ENCODE measurements at regions of chr14 and their contacts with region 1.

Region 1: DNA sequence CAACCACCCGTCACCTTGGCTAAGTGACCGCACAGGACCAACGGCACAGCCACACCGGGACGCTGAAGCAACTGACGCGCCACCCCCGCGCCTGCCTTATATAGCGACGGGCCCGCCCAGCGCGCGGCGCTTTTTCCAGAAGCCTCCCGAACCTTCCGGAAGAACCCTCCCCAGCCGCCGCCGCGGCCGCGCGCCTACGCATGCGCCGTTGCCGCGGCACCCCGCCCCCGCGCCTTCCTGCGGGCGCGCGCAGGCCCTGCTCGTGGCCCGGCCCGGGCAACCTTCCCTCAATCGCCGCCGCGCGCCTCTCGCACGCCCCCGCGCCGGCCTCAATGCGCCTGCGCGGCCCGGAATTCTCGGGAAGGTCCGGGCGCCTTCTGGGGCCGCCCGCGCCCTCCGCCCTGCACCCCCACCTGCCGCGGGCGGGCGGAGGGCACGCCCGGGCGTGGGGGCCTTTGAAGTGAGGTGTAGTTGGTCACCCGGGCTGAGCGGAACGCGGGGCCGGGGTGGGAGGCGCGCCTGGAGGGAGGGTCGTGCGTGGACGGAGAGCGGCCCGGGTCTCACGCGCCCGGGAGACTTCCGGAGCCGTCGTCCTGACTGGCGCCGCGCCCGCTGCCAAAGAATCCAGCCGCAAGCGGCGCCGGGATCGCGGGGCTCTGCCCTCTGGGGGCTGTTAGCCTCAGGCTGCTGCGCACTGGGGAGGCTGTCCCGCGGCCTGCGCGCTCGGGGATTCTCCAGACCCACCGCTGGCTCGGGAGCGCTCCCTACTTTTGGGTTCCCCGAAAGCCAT is at the start of gene HSP90AA1:
- DNase-seq: peak; percentile 97
- H3K4me3 ChIP-seq: peak within 1 kb of the TSS; percentile 91 to 99 (median 94)
- H3K27ac ChIP-seq: peak within 1 kb of the TSS; percentile 99 to 100 (median 100)
- H3K4me1 ChIP-seq: peaks cover 2 to 50% (median 47%) of the 10 kb centered on the region in 4 donors
- H3K27me3 ChIP-seq: no peaks in the 10 kb centered on the region
- CTCF ChIP-seq: peak in 2 of 4 experiments; percentile 15 to 24
- EP300 ChIP-seq: peak in 1 of 4 donors; percentile 32
- POLR2A ChIP-seq: peak; percentile 98
- total RNA-seq, gene HSP90AA1: 252 to 463 (median 333) TPM

Region 2: GRCh38 chr14:101761032-101761880 is 325.9 kb before region 1 on chr14 and contains the start of gene PPP2R5C:
- intact Hi-C with region 1: no loop called
- DNase-seq: peak; percentile 97
- H3K4me3 ChIP-seq: peak within 1 kb of the TSS; percentile 65 to 98 (median 82)
- H3K27ac ChIP-seq: peak within 1 kb of the TSS; percentile 89 to 98 (median 95)
- H3K4me1 ChIP-seq: peaks cover 0 to 22% (median 19%) of the 10 kb centered on the region in 4 donors
- H3K27me3 ChIP-seq: no peaks in the 10 kb centered on the region
- CTCF ChIP-seq: no peak
- EP300 ChIP-seq: no peak
- POLR2A ChIP-seq: peak; percentile 72 to 91
- total RNA-seq, gene PPP2R5C: 115 to 175 (median 147) TPM

Region 3: GRCh38 chr14:101932673-101933072 is 154.5 kb before region 1 on chr14:
- intact Hi-C with region 1: no loop called
- DNase-seq: peak; percentile 34
- H3K4me3 ChIP-seq: no peak overlapping the region
- H3K27ac ChIP-seq: no peak overlapping the region
- H3K4me1 ChIP-seq: peaks cover 0 to 11% (median 6%) of the 10 kb centered on the region in 4 donors
- H3K27me3 ChIP-seq: no peaks in the 10 kb centered on the region
- CTCF ChIP-seq: no peak
- EP300 ChIP-seq: no peak
- POLR2A ChIP-seq: no peak

Region 4: GRCh38 chr14:102591889-102592763 is 505.0 kb after region 1 on chr14 and contains the start of gene RCOR1:
- intact Hi-C with region 1: loop called (anchors 5 kb)
- DNase-seq: peak; percentile 99
- H3K4me3 ChIP-seq: peak within 1 kb of the TSS; percentile 67 to 92 (median 86)
- H3K27ac ChIP-seq: peak within 1 kb of the TSS; percentile 88 to 99 (median 98)
- H3K4me1 ChIP-seq: peaks cover 0 to 32% (median 29%) of the 10 kb centered on the region in 4 donors
- H3K27me3 ChIP-seq: no peaks in the 10 kb centered on the region
- CTCF ChIP-seq: no peak
- EP300 ChIP-seq: no peak
- POLR2A ChIP-seq: peak; percentile 15 to 21
- total RNA-seq, gene RCOR1: 8.9 to 11.9 (median 11.8) TPM